Naive thymus-derived CD8-positive, alpha-beta T cell (primary cell): ENCODE measurements at regions of chr17 and their contacts with region 1.

Region 1: DNA sequence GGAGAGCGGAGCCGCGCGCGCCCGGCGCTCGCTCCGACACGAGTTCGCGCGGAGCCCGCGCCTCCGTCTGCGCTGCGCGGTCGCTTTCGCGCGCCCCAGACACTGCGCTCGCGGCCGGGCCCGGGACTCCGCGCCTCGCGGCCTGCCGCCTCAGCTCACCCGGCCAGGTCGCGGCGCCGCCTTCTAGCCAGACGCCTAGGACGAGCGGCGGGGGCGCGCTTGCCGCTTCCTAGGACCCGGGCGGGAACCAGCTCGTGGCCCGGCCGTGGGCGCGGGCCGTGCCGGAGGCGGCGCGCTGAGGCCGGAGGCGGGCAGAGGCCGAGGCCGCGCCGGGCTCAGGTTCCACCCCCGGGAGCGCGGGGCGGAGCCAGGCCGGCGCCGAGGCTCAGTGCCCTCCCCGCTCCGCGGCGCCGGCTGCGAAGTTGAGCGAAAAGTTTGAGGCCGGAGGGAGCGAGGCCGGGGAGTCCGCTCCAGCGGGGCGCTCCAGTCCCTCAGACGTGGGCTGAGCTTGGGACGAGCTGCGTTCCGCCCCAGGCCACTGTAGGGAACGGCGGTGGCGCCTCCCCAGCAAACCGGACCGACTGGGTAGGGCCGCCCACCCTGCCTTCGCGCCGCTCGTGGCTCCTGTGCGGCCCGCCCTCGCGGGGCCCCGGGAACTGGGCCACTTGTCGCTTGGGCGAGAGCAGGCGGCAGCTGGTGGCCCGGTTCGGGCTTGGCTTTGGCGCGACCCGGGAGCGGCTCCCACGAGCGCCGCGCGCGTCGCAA is at the start of gene SPHK1:
- DNase-seq: peak in 8 of 10 donors; percentile 12 to 48 (median 40)
- ATAC-seq: peak; percentile 39 to 65
- H3K4me3 Mint-ChIP-seq: peak within 1 kb of the TSS; percentile 79 to 95 (median 90)
- H3K27ac Mint-ChIP-seq: peak within 1 kb of the TSS in 8 of 10 donors; percentile 34 to 87 (median 72)
- H3K4me1 Mint-ChIP-seq: peaks cover 6 to 14% (median 11%) of the 10 kb centered on the region in 4 donors
- H3K27me3 Mint-ChIP-seq: peaks cover 0 to 3% (median 0%) of the 10 kb centered on the region in 5 donors
- polyA plus RNA-seq, gene SPHK1: 0.31 to 0.37 TPM in 2 of 3 donors, not detected in the other

Region 2: GRCh38 chr17:76343106-76343505 is 41.3 kb before region 1 on chr17:
- POLR2A ChIA-PET with region 1: no interaction called
- DNase-seq: no peak
- ATAC-seq: no peak
- H3K4me3 Mint-ChIP-seq: no peak overlapping the region
- H3K27ac Mint-ChIP-seq: no peak overlapping the region
- H3K4me1 Mint-ChIP-seq: peaks cover 0 to 3% (median 0%) of the 10 kb centered on the region in 4 donors
- H3K27me3 Mint-ChIP-seq: no peaks in the 10 kb centered on the region

Region 3: DNA sequence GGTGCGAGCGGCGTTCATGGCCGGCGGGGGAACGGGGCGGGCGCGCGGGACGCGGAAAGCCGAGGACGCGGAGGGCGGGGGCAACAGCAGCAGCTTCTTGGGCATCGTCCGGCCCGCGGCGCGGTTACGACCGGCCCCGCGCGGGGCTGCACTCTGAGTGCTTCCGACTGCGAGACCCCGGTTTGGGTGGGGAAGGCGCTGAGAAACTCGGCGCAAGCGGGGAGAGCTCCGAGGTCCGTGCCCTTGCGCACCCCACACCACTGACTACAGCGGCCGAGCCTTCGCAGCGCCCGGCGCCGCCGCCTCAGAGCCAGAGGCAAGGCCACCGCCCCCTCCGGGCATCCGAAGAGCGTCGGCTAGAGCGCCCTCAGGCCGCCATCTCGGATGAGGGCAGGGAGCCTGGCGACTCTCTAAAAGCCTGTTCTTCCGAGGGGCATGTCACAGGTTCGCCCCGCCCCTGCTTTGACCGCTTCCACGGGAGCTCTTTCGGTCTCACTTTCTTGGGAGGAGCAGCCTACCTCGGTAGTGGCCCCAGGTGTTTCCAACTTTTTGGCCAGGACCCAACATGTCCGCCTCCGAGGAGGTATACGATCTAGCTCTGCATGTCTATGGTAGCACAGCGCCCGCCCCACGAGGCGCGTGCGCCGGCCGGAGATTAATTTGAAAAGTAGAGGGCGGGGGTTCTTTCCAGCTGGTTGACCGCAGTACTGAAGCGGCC is 30.6 kb before region 1 on chr17 and contains the start of gene PRPSAP1:
- POLR2A ChIA-PET with region 1: interaction called, 39 read pairs
- DNase-seq: peak; percentile 60 to 97 (median 74)
- ATAC-seq: peak; percentile 95 to 96
- H3K4me3 Mint-ChIP-seq: peak within 1 kb of the TSS; percentile 85 to 100 (median 97)
- H3K27ac Mint-ChIP-seq: peak within 1 kb of the TSS; percentile 92 to 99 (median 98)
- H3K4me1 Mint-ChIP-seq: peaks cover 8 to 29% (median 23%) of the 10 kb centered on the region in 4 donors
- H3K27me3 Mint-ChIP-seq: no peaks in the 10 kb centered on the region
- polyA plus RNA-seq, gene PRPSAP1: 37.9 to 62.9 (median 54.7) TPM

Region 4: GRCh38 chr17:76397687-76398487 is 13.5 kb after region 1 on chr17:
- POLR2A ChIA-PET with region 1: interaction called, 25 read pairs
- DNase-seq: peak; percentile 65 to 92 (median 80)
- ATAC-seq: peak; percentile 80 to 90
- H3K4me3 Mint-ChIP-seq: no peak overlapping the region
- H3K27ac Mint-ChIP-seq: no peak overlapping the region
- H3K4me1 Mint-ChIP-seq: peaks cover 0 to 4% (median 0%) of the 10 kb centered on the region in 4 donors
- H3K27me3 Mint-ChIP-seq: no peaks in the 10 kb centered on the region

Region 5: GRCh38 chr17:76458580-76459490 is 74.4 kb after region 1 on chr17:
- POLR2A ChIA-PET with region 1: no interaction called
- DNase-seq: no peak
- ATAC-seq: peak in 1 of 2 donors; percentile 30
- H3K4me3 Mint-ChIP-seq: no peak overlapping the region
- H3K27ac Mint-ChIP-seq: peak overlapping the region in 1 of 10 donors; percentile 65
- H3K4me1 Mint-ChIP-seq: peaks cover 0 to 1% (median 0%) of the 10 kb centered on the region in 4 donors
- H3K27me3 Mint-ChIP-seq: peaks cover 0 to 1% (median 0%) of the 10 kb centered on the region in 5 donors